ENCODE measurements at regions of chr7 and their contacts with region 1.

Region 1: GRCh38 chr7:28069807-28070206 is 110.8 kb downstream of the JAZF1 start:
- DNase-seq: no peak
- H3K4me3 ChIP-seq: no peak overlapping the region
- H3K27ac ChIP-seq: peak overlapping the region in 1 of 2 donors; percentile 20
- H3K4me1 ChIP-seq: no peaks in the 10 kb centered on the region
- H3K27me3 ChIP-seq: no peaks in the 10 kb centered on the region
- CTCF ChIP-seq: no peak
- POLR2A ChIP-seq: no peak

Region 2: GRCh38 chr7:27944643-27945042 is 125.2 kb before region 1 on chr7:
- intact Hi-C with region 1: no loop called
- DNase-seq: no peak
- H3K4me3 ChIP-seq: no peak overlapping the region
- H3K27ac ChIP-seq: no peak overlapping the region
- H3K4me1 ChIP-seq: no peaks in the 10 kb centered on the region
- H3K27me3 ChIP-seq: no peaks in the 10 kb centered on the region
- CTCF ChIP-seq: no peak
- POLR2A ChIP-seq: no peak

Region 3: DNA sequence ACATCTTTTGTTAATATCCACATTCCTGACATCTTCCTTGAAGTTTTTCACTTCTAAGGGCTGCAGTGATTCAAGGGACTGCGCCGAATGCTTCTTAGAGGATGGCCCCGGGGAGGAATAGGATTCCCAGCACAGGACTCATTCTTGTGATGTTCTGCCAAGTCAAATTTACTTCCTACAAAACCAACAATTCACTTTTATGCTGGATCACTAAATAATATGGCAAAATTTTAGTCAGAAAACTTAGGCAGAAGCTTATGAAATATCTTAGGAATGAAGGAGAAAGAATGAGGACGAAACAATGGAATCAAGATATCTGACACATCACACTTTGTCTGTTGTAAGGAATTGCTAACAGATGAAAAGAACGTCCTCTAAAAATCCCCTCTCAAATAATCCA is 40.8 kb before region 1 on chr7:
- intact Hi-C with region 1: loop called (anchors 5 kb)
- DNase-seq: no peak
- H3K4me3 ChIP-seq: no peak overlapping the region
- H3K27ac ChIP-seq: peak overlapping the region in 1 of 2 donors; percentile 30
- H3K4me1 ChIP-seq: peaks cover 3% of the 10 kb centered on the region
- H3K27me3 ChIP-seq: no peaks in the 10 kb centered on the region
- CTCF ChIP-seq: no peak
- POLR2A ChIP-seq: no peak

Region 4: GRCh38 chr7:28378574-28379149 is 308.9 kb after region 1 on chr7:
- intact Hi-C with region 1: no loop called
- DNase-seq: no peak
- H3K4me3 ChIP-seq: no peak overlapping the region
- H3K27ac ChIP-seq: no peak overlapping the region
- H3K4me1 ChIP-seq: no peaks in the 10 kb centered on the region
- H3K27me3 ChIP-seq: no peaks in the 10 kb centered on the region
- CTCF ChIP-seq: no peak
- POLR2A ChIP-seq: no peak